Endothelial cell of umbilical vein (primary cell): ENCODE measurements at regions of chr2 and their contacts with region 1.

Region 1: GRCh38 chr2:210049831-210050230 is 47.4 kb downstream of the RPE start:
- DNase-seq: no peak
- H3K4me3 ChIP-seq: no peak overlapping the region
- H3K27ac ChIP-seq: no peak overlapping the region
- H3K4me1 ChIP-seq: no peaks in the 10 kb centered on the region
- H3K27me3 ChIP-seq: no peaks in the 10 kb centered on the region
- CTCF ChIP-seq: no peak
- POLR2A ChIP-seq: no peak

Region 2: GRCh38 chr2:209936106-209936666 is 113.6 kb before region 1 on chr2:
- CTCF ChIA-PET with region 1: no interaction called
- POLR2A ChIA-PET with region 1: no interaction called
- dilution Hi-C with region 1: no loop called
- intact Hi-C with region 1: no loop called
- DNase-seq: no peak
- H3K4me3 ChIP-seq: no peak overlapping the region
- H3K27ac ChIP-seq: no peak overlapping the region
- H3K4me1 ChIP-seq: no peaks in the 10 kb centered on the region
- H3K27me3 ChIP-seq: no peaks in the 10 kb centered on the region
- CTCF ChIP-seq: peak in 1 of 2 donors; percentile 3
- POLR2A ChIP-seq: no peak

Region 3: DNA sequence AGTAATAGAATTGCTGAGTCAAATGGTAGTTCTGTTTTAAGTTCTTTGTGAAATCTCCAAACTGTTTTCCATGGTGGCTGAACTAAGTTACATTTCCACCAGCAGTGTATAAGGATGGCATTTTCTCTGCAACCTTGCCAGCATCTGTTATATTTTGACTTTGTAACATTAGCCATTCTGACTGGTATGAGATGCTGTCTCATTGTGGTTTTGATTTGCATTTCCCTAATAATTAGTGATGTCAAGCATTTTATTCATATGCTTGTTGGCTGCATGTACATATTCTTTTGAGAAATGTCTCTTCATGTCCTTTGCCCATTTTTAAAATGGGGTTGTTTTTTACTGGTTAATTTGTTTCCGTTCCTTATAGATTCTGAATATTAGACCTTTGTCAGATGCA is 362.8 kb after region 1 on chr2:
- CTCF ChIA-PET with region 1: no interaction called
- POLR2A ChIA-PET with region 1: no interaction called
- dilution Hi-C with region 1: no loop called
- intact Hi-C with region 1: loop called (anchors 5 kb)
- DNase-seq: no peak
- H3K4me3 ChIP-seq: no peak overlapping the region
- H3K27ac ChIP-seq: no peak overlapping the region
- H3K4me1 ChIP-seq: no peaks in the 10 kb centered on the region
- H3K27me3 ChIP-seq: no peaks in the 10 kb centered on the region
- CTCF ChIP-seq: no peak
- POLR2A ChIP-seq: no peak